ENCODE measurements at regions of chr11 and their contacts with region 1.

Region 1: DNA sequence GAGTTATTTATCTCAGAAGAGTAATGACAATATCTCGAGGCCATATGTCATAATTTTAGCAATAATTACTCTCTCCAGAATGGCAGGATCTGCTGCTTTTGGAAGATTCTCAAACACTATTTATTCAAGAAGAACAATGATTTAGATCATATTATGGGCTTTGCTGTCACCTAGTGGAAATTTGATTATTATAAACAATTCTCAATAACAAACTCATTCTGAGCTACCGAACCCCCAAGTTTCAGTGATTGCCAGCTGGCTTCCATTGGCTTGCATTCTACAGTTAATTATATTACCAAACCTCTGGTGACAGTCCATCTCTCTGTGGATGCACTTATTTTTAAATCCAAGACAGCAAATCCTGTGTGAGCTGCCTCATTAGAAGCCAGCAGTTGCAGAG is 27.9 kb upstream of the SLC36A4 start:
- DNase-seq: no peak
- ATAC-seq: no peak
- H3K4me3 Mint-ChIP-seq: no peak overlapping the region
- H3K27ac Mint-ChIP-seq: no peak overlapping the region
- H3K4me1 Mint-ChIP-seq: no peaks in the 10 kb centered on the region
- H3K27me3 Mint-ChIP-seq: peaks cover 2% of the 10 kb centered on the region

Region 2: GRCh38 chr11:92941676-92942571 is 283.7 kb before region 1 on chr11:
- CTCF ChIA-PET with region 1: interaction called, 28 read pairs
- POLR2A ChIA-PET with region 1: no interaction called
- DNase-seq: peak; percentile 29
- ATAC-seq: peak; percentile 39
- H3K4me3 Mint-ChIP-seq: no peak overlapping the region
- H3K27ac Mint-ChIP-seq: no peak overlapping the region
- H3K4me1 Mint-ChIP-seq: peaks cover 4% of the 10 kb centered on the region
- H3K27me3 Mint-ChIP-seq: peaks cover 7% of the 10 kb centered on the region

Region 3: GRCh38 chr11:93295921-93296575 is 70.4 kb after region 1 on chr11:
- CTCF ChIA-PET with region 1: no interaction called
- POLR2A ChIA-PET with region 1: no interaction called
- DNase-seq: no peak
- ATAC-seq: no peak
- H3K4me3 Mint-ChIP-seq: no peak overlapping the region
- H3K27ac Mint-ChIP-seq: no peak overlapping the region
- H3K4me1 Mint-ChIP-seq: no peaks in the 10 kb centered on the region
- H3K27me3 Mint-ChIP-seq: peaks cover 2% of the 10 kb centered on the region

Region 4: GRCh38 chr11:93570759-93571413 is 345.2 kb after region 1 on chr11:
- CTCF ChIA-PET with region 1: no interaction called
- POLR2A ChIA-PET with region 1: no interaction called
- DNase-seq: no peak
- ATAC-seq: no peak
- H3K4me3 Mint-ChIP-seq: no peak overlapping the region
- H3K27ac Mint-ChIP-seq: no peak overlapping the region
- H3K4me1 Mint-ChIP-seq: no peaks in the 10 kb centered on the region
- H3K27me3 Mint-ChIP-seq: peaks cover 5% of the 10 kb centered on the region

Measured in activated CD8-positive, alpha-beta T cell treated with anti-CD3 and anti-CD28 coated beads, Interleukin-2, amount 10 ng/mL, durations not matched to agents 7 days and 5 days (primary cell).